ENCODE measurements at regions of chr3 and their contacts with region 1.

Region 1: GRCh38 chr3:132535575-132536441 is 61.3 kb upstream of the ACKR4 start:
- DNase-seq: peak; percentile 78
- H3K4me3 ChIP-seq: no peak overlapping the region
- H3K27ac ChIP-seq: no peak overlapping the region
- H3K27me3 ChIP-seq: no peaks in the 10 kb centered on the region
- CTCF ChIP-seq: peak; percentile 62

Region 2: GRCh38 chr3:132245552-132246142 is 290.2 kb before region 1 on chr3:
- CTCF ChIA-PET with region 1: no interaction called
- POLR2A ChIA-PET with region 1: no interaction called
- DNase-seq: no peak
- H3K4me3 ChIP-seq: no peak overlapping the region
- H3K27ac ChIP-seq: no peak overlapping the region
- H3K27me3 ChIP-seq: peaks cover 9% of the 10 kb centered on the region
- CTCF ChIP-seq: no peak

Region 3: GRCh38 chr3:132507657-132508056 is 28.2 kb before region 1 on chr3:
- CTCF ChIA-PET with region 1: interaction called, 33 read pairs
- POLR2A ChIA-PET with region 1: no interaction called
- DNase-seq: no peak
- H3K4me3 ChIP-seq: no peak overlapping the region
- H3K27ac ChIP-seq: no peak overlapping the region
- H3K27me3 ChIP-seq: no peaks in the 10 kb centered on the region
- CTCF ChIP-seq: no peak

Region 4: GRCh38 chr3:132549890-132550578 is 14.2 kb after region 1 on chr3:
- CTCF ChIA-PET with region 1: interaction called, 21 read pairs
- POLR2A ChIA-PET with region 1: no interaction called
- DNase-seq: no peak
- H3K4me3 ChIP-seq: no peak overlapping the region
- H3K27ac ChIP-seq: no peak overlapping the region
- H3K27me3 ChIP-seq: no peaks in the 10 kb centered on the region
- CTCF ChIP-seq: no peak

Region 5: DNA sequence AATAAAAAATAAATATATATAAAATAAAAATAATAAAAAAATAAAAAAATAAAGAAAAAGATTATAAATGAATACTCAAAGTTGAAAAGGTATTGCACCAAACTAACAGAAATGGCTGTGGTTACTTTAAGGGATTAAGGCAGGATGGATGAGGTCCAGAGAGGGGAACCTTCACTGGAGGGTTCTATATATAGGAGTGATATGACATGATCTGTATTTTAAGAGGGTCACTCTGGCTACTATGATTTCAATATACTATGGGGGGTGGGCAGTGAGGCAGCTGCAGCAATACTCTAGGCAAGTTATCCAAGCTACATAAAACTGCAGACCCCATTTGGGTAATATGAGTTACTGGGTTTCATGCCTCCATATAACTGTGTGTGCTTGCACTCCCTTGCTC is 99.2 kb after region 1 on chr3:
- CTCF ChIA-PET with region 1: interaction called, 381 read pairs
- POLR2A ChIA-PET with region 1: no interaction called
- DNase-seq: no peak
- H3K4me3 ChIP-seq: no peak overlapping the region
- H3K27ac ChIP-seq: no peak overlapping the region
- H3K27me3 ChIP-seq: no peaks in the 10 kb centered on the region
- CTCF ChIP-seq: no peak

Region 6: DNA sequence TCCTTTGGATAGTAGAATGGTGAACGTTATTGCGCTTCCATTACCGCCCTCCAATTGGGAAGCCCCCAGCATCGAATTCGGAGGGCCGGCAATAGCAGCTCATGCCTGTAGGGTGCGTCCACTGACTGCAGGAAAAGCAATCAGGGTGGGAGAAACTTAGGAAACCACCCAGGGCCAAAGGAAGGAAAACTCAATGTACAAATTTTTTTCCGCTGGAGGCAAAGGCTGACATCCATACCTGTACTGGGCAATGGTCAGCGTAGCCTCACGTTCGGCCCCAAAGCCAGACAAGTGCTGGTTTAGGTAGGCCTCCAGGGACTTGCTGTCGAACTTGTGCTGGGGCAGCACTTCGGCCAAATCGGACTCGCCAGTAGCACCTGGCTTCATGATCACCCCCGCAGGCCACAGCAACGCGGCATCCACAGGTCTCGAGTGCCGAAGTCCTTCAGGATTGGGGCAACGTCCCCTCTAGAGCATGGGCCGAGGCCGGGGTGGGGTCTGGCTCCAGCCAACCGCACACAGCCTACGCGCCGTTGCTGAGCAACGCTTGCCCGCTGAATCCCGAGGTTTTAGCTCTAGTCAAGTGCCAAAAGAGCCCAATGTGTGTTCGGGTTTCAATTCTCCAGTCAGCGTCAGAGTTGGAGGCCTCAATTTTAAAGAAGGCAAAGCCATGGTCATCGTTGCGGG is 123.7 kb after region 1 on chr3 and contains the start of gene ACAD11:
- CTCF ChIA-PET with region 1: interaction called, 65 read pairs
- POLR2A ChIA-PET with region 1: interaction called, 3 read pairs
- DNase-seq: peak; percentile 15
- H3K4me3 ChIP-seq: peak within 1 kb of the TSS; percentile 76
- H3K27ac ChIP-seq: peak within 1 kb of the TSS; percentile 84
- H3K27me3 ChIP-seq: no peaks in the 10 kb centered on the region
- CTCF ChIP-seq: peak; percentile 76
- polyA plus RNA-seq, gene ACAD11: 21.9 and 23.3 TPM in 2 replicates

Region 7: GRCh38 chr3:132749786-132750185 is 214.0 kb after region 1 on chr3:
- CTCF ChIA-PET with region 1: no interaction called
- POLR2A ChIA-PET with region 1: no interaction called
- DNase-seq: no peak
- H3K4me3 ChIP-seq: no peak overlapping the region
- H3K27ac ChIP-seq: no peak overlapping the region
- H3K27me3 ChIP-seq: no peaks in the 10 kb centered on the region
- CTCF ChIP-seq: no peak